ENCODE measurements at regions of chr10 and their contacts with region 1.

Region 1: DNA sequence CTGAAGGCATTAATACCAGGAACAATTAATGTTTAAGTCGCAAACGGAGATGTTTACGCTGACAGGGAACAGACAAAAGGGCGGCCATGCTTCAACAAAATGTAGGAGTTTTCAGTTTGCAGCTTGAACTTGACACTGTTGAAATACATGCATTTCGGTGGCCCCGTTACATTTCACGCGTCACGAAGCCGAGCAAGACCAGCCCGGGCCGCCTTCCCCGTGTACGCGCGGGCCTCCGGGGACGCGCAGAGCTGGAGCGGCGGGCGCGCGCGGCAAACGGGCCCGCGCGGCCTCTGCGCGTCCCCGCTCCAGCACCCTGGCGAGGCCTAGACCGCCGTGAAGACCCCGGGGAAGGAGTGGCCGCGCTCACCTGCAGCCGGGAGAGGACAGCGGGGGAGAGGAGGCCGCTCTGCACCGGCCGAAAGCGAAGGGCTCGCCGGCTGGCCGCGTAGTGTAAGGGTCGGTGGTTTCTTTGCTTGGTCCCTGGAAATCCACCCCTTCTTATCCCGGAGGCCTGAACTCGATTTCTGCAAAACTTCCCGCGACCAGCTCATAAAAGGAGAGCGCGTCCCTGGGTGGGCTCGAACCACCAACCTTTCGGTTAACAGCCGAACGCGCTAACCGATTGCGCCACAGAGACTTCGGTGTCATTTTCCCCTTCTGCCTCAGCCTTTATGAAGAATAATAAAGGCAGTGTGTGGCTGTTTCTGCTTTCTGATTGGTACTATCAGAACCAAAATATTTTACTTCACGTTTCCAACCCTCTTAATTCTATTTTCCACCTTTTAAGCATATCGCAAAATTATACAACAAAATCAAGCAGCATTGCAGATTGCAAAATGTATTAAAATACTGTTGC is 11.4 kb upstream of the EBLN1 start:
- DNase-seq: peak; percentile 90 to 92 (median 92)
- H3K4me3 ChIP-seq: peak overlapping the region; percentile 61
- H3K4me3 Mint-ChIP-seq: peak overlapping the region; percentile 87 to 98 (median 95)
- H3K27ac ChIP-seq: peak overlapping the region; percentile 61
- H3K27ac Mint-ChIP-seq: peak overlapping the region; percentile 86 to 100 (median 99)
- H3K4me1 ChIP-seq: peaks cover 15% of the 10 kb centered on the region
- H3K4me1 Mint-ChIP-seq: peaks cover 15 to 35% (median 16%) of the 10 kb centered on the region in 4 donors
- H3K27me3 ChIP-seq: no peaks in the 10 kb centered on the region
- H3K27me3 Mint-ChIP-seq: peaks cover 5 to 7% of the 10 kb centered on the region in 2 donors

Region 2: DNA sequence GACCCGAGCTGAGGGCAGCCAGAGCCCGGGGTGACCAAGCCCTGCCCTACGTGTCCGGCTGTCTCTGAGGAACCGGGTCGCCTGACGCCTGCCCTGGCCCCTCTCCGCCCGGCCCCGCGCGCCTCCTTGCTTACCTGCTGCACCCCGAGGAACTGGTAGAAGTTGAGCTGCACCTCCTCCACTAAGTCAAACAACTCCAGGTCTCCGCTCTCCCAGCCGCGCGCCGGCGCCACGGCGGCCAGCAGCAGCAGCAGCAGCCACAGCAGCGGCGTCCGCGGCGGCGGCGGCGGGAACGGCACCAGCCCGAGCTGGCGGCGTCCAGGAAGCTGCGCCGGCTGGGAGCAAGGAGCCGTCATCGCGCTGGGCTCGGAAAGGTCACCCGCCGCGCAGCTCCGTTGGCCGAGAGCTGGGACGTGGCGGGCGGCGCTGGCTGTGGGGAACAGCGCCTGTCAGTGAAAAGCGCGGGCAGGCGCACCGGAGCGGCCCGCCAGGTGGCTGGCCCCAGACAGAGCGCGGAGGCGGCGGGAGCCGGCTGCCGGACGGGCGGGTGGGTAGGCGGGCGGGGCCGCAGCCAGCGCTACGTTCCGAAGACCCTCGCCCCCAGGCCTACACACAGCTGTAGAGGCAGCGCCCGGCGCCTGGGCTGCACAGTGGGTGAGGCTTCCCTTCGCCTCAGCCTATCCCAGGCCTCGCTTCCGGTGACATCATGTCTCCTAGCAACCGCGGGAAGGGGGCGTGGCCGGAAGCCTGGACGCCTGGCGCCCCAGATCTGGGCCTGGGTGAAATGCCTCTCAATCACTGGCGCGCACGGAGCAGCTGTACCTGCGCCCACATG is 225.9 kb before region 1 on chr10 and contains the start of gene DNAJC1:
- CTCF ChIA-PET with region 1: interaction called, 3 read pairs
- POLR2A ChIA-PET with region 1: interaction called, 25 read pairs
- intact Hi-C with region 1: loop called (anchors 1 kb)
- DNase-seq: peak; percentile 96 to 98 (median 96)
- H3K4me3 ChIP-seq: peak within 1 kb of the TSS; percentile 62 to 89
- H3K4me3 Mint-ChIP-seq: peak within 1 kb of the TSS; percentile 94 to 100 (median 98)
- H3K27ac ChIP-seq: peak within 1 kb of the TSS; percentile 84
- H3K27ac Mint-ChIP-seq: peak within 1 kb of the TSS; percentile 91 to 99 (median 97)
- H3K4me1 ChIP-seq: peaks cover 26% of the 10 kb centered on the region
- H3K4me1 Mint-ChIP-seq: peaks cover 23 to 45% (median 34%) of the 10 kb centered on the region in 4 donors
- H3K27me3 ChIP-seq: peaks cover 3% of the 10 kb centered on the region
- H3K27me3 Mint-ChIP-seq: peaks cover 0 to 4% of the 10 kb centered on the region in 2 donors
- total RNA-seq, gene DNAJC1: 15.0 to 16.7 TPM

Region 3: GRCh38 chr10:22103701-22104470 is 125.3 kb before region 1 on chr10:
- CTCF ChIA-PET with region 1: no interaction called
- POLR2A ChIA-PET with region 1: no interaction called
- intact Hi-C with region 1: no loop called
- DNase-seq: peak in 3 of 5 donors; percentile 5 to 10 (median 8)
- H3K4me3 ChIP-seq: no peak overlapping the region
- H3K4me3 Mint-ChIP-seq: no peak overlapping the region
- H3K27ac ChIP-seq: no peak overlapping the region
- H3K27ac Mint-ChIP-seq: peak overlapping the region in 1 of 7 donors; percentile 6
- H3K4me1 ChIP-seq: no peaks in the 10 kb centered on the region
- H3K4me1 Mint-ChIP-seq: no peaks in the 10 kb centered on the region
- H3K27me3 ChIP-seq: no peaks in the 10 kb centered on the region
- H3K27me3 Mint-ChIP-seq: no peaks in the 10 kb centered on the region

Region 4: GRCh38 chr10:22244001-22244400 is 14.8 kb after region 1 on chr10:
- CTCF ChIA-PET with region 1: interaction called, 6 read pairs
- POLR2A ChIA-PET with region 1: interaction called, 27 read pairs
- intact Hi-C with region 1: loop called (anchors 1 kb)
- DNase-seq: no peak
- H3K4me3 ChIP-seq: no peak overlapping the region
- H3K4me3 Mint-ChIP-seq: no peak overlapping the region
- H3K27ac ChIP-seq: no peak overlapping the region
- H3K27ac Mint-ChIP-seq: no peak overlapping the region
- H3K4me1 ChIP-seq: peaks cover 24% of the 10 kb centered on the region
- H3K4me1 Mint-ChIP-seq: peaks cover 8 to 34% (median 17%) of the 10 kb centered on the region in 4 donors
- H3K27me3 ChIP-seq: no peaks in the 10 kb centered on the region
- H3K27me3 Mint-ChIP-seq: peaks cover 2 to 10% of the 10 kb centered on the region in 2 donors

Region 5: GRCh38 chr10:22259280-22259679 is 30.1 kb after region 1 on chr10:
- CTCF ChIA-PET with region 1: interaction called, 14 read pairs
- POLR2A ChIA-PET with region 1: interaction called, 66 read pairs
- intact Hi-C with region 1: no loop called
- DNase-seq: peak in 3 of 5 donors; percentile 15 to 26 (median 21)
- H3K4me3 ChIP-seq: no peak overlapping the region
- H3K4me3 Mint-ChIP-seq: no peak overlapping the region
- H3K27ac ChIP-seq: no peak overlapping the region
- H3K27ac Mint-ChIP-seq: peak overlapping the region in 2 of 7 donors; percentile 7 to 43
- H3K4me1 ChIP-seq: peaks cover 15% of the 10 kb centered on the region
- H3K4me1 Mint-ChIP-seq: peaks cover 6 to 33% (median 20%) of the 10 kb centered on the region in 4 donors
- H3K27me3 ChIP-seq: no peaks in the 10 kb centered on the region
- H3K27me3 Mint-ChIP-seq: peaks cover 0 to 3% of the 10 kb centered on the region in 2 donors

Region 6: GRCh38 chr10:22325272-22326144 is 96.3 kb after region 1 on chr10:
- CTCF ChIA-PET with region 1: no interaction called
- POLR2A ChIA-PET with region 1: interaction called, 16 read pairs
- intact Hi-C with region 1: loop called (anchors 1 kb)
- DNase-seq: peak; percentile 83 to 86 (median 84)
- H3K4me3 ChIP-seq: peak overlapping the region; percentile 40 to 68
- H3K4me3 Mint-ChIP-seq: peak overlapping the region; percentile 85 to 94 (median 88)
- H3K27ac ChIP-seq: peak overlapping the region; percentile 65
- H3K27ac Mint-ChIP-seq: peak overlapping the region; percentile 81 to 97 (median 91)
- H3K4me1 ChIP-seq: peaks cover 39% of the 10 kb centered on the region
- H3K4me1 Mint-ChIP-seq: peaks cover 35 to 44% (median 39%) of the 10 kb centered on the region in 4 donors
- H3K27me3 ChIP-seq: no peaks in the 10 kb centered on the region
- H3K27me3 Mint-ChIP-seq: peaks cover 10 to 13% of the 10 kb centered on the region in 2 donors

Region 7: DNA sequence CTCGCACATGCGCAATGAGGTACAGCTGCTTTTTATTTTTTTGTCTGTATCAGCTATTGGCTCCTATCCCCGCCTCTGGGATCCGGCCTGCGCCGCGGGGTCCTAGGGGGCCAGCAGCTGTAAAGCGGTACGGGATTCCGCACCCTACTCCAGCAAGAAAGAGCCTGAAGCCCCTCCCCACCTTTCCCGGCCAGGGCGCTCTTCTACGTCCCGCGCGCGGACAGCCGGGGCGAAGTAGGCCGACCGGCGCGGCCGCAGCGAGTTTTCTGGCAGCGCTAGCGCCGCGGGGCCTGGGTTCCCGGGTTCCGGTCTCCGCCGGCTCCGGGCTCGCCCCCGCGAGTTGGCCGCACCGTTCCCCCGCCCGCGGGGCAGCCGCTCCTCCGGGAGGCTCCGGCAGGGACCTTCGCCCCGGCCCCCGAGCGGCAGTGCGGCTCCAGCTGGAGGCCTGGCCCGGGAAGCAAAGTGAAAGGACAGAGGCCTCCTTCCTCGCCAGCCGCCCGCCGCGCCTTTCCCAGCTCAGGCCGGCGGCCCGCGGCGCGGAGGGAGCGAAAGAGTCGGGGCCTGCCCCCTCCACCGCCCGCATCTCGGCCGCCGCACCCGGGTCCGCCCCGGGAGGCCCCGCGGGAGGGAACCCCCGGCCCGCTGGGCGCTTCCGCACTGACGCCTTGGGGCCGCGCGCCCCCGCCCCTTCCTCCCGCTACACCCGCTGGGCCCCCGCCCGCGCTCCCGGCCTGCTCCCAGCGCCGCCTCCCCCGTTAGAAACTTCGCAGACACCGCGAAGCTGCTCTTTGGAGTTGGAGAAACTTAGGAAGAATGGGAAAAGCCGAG is 111.4 kb after region 1 on chr10:
- CTCF ChIA-PET with region 1: no interaction called
- POLR2A ChIA-PET with region 1: interaction called, 15 read pairs
- intact Hi-C with region 1: loop called (anchors 1 kb)
- DNase-seq: peak; percentile 70 to 77 (median 74)
- H3K4me3 ChIP-seq: peak overlapping the region in 1 of 2 donors; percentile 52
- H3K4me3 Mint-ChIP-seq: peak overlapping the region; percentile 87 to 97 (median 90)
- H3K27ac ChIP-seq: peak overlapping the region; percentile 40
- H3K27ac Mint-ChIP-seq: peak overlapping the region; percentile 86 to 97 (median 93)
- H3K4me1 ChIP-seq: peaks cover 30% of the 10 kb centered on the region
- H3K4me1 Mint-ChIP-seq: peaks cover 9 to 45% (median 23%) of the 10 kb centered on the region in 4 donors
- H3K27me3 ChIP-seq: peaks cover 90% of the 10 kb centered on the region
- H3K27me3 Mint-ChIP-seq: peaks cover 45 to 61% of the 10 kb centered on the region in 2 donors